Mammary epithelial cell (primary cell): ENCODE measurements at regions of chr1 and their contacts with region 1.

Region 1: GRCh38 chr1:14850566-14850965 is 252.1 kb downstream of the KAZN start:
- DNase-seq: no peak
- H3K4me3 ChIP-seq: no peak overlapping the region
- H3K27ac ChIP-seq: no peak overlapping the region
- H3K4me1 ChIP-seq: no peaks in the 10 kb centered on the region
- H3K27me3 ChIP-seq: no peaks in the 10 kb centered on the region
- CTCF ChIP-seq: peak in 1 of 2 donors; percentile 46

Region 2: GRCh38 chr1:14606632-14607031 is 243.9 kb before region 1 on chr1:
- CTCF ChIA-PET with region 1: no interaction called
- dilution Hi-C with region 1: no loop called
- in situ Hi-C with region 1: no loop called
- intact Hi-C with region 1: loop called (anchors 2 kb)
- DNase-seq: no peak
- H3K4me3 ChIP-seq: no peak overlapping the region
- H3K27ac ChIP-seq: no peak overlapping the region
- H3K4me1 ChIP-seq: no peaks in the 10 kb centered on the region
- H3K27me3 ChIP-seq: no peaks in the 10 kb centered on the region
- CTCF ChIP-seq: peak; percentile 49 to 89

Region 3: GRCh38 chr1:15246960-15247614 is 396.5 kb after region 1 on chr1 and contains the start of gene FHAD1:
- CTCF ChIA-PET with region 1: no interaction called
- dilution Hi-C with region 1: no loop called
- in situ Hi-C with region 1: no loop called
- intact Hi-C with region 1: no loop called
- DNase-seq: peak; percentile 62
- H3K4me3 ChIP-seq: peak within 1 kb of the TSS; percentile 11 to 48 (median 43)
- H3K27ac ChIP-seq: no peak within 1 kb of the TSS
- H3K4me1 ChIP-seq: peaks cover 4% of the 10 kb centered on the region
- H3K27me3 ChIP-seq: no peaks in the 10 kb centered on the region
- CTCF ChIP-seq: no peak
- total RNA-seq, gene FHAD1: 0.12 to 0.33 TPM